HEK293 (cell line): ENCODE measurements at regions of chr17 and their contacts with region 1.

Region 1: DNA sequence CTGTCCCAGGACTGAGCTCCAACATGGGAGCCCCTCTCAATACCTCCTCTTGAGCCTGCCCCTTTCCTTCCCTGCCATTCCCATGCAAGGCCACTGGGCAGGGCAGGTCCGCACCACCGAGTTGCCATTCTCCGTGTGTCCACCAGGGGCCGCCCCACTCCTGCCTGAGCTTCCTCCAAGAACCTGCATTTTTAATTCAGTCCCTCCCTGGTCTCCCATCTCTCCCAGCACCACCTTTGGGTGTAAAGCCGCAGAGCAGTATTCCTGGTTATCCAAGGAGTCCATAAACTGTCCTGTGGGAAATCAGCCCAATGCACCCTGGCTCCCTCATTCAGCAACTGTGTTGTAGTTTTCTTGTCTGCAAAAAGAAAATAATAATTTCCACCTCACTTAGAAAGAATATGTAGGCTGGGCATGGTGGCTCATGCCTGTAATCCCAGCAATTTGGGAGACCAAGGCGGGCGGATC is 15.9 kb upstream of the ANKRD40CL start:
- H3K4me3 ChIP-seq: no peak overlapping the region
- H3K27ac ChIP-seq: no peak overlapping the region
- H3K4me1 ChIP-seq: no peaks in the 10 kb centered on the region
- CTCF ChIP-seq: peak; percentile 98

Region 2: GRCh38 chr17:50476545-50476937 is 306.7 kb before region 1 on chr17:
- CTCF ChIA-PET with region 1: no interaction called
- POLR2A ChIA-PET with region 1: no interaction called
- H3K4me3 ChIP-seq: no peak overlapping the region
- H3K27ac ChIP-seq: no peak overlapping the region
- H3K4me1 ChIP-seq: peaks cover 6% of the 10 kb centered on the region
- CTCF ChIP-seq: no peak

Region 3: DNA sequence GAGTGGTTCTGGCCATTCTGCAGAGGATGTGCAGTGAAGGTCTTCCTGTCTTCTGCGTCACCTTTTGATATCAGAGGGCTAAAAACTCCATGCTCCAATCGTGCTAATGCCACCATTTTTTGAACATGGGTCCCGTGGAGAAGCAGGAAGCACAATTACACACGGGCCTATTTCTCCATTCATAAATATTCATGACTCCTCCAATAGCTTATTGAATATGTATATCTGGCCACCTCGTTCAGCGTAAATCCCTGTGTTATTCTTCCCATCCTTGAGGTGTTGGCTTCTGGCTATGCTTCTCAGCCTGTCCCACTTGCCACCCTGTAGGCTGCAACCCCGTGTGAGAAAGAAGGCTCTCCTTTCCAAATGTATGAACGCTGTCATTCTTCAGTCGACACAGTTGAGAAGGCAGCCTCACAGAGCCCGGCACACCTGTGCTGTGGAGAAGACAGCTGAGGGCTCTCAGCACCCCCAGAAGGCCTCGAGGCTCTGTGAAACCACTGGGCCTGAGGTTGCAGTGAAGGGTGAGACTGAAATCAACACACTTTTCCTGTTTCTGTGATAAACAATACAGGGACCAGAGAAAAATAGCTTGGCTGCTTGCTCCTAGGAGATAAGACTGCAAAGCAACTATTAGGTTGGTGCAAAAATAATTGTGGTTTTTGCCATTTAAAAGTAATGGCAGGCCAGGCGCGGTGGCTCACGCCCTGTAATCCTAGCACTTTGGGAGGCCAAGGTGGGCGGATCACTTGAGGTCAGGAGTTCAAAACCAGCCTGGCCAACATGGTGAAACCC is 11.0 kb before region 1 on chr17:
- CTCF ChIA-PET with region 1: interaction called, 27 read pairs
- POLR2A ChIA-PET with region 1: interaction called, 3 read pairs
- H3K4me3 ChIP-seq: no peak overlapping the region
- H3K27ac ChIP-seq: no peak overlapping the region
- H3K4me1 ChIP-seq: no peaks in the 10 kb centered on the region
- CTCF ChIP-seq: no peak

Region 4: GRCh38 chr17:50806141-50806643 is 23.0 kb after region 1 on chr17:
- CTCF ChIA-PET with region 1: interaction called, 41 read pairs
- POLR2A ChIA-PET with region 1: no interaction called
- H3K4me3 ChIP-seq: no peak overlapping the region
- H3K27ac ChIP-seq: no peak overlapping the region
- H3K4me1 ChIP-seq: no peaks in the 10 kb centered on the region; the same call in 1 of the 2 replicates
- CTCF ChIP-seq: no peak

Region 5: GRCh38 chr17:50828508-50829170 is 45.4 kb after region 1 on chr17:
- CTCF ChIA-PET with region 1: interaction called, 11 read pairs
- POLR2A ChIA-PET with region 1: no interaction called
- H3K4me3 ChIP-seq: no peak overlapping the region
- H3K27ac ChIP-seq: no peak overlapping the region
- H3K4me1 ChIP-seq: no peaks in the 10 kb centered on the region
- CTCF ChIP-seq: no peak

Region 6: GRCh38 chr17:50853015-50853615 is 69.9 kb after region 1 on chr17:
- CTCF ChIA-PET with region 1: interaction called, 240 read pairs
- POLR2A ChIA-PET with region 1: no interaction called
- H3K4me3 ChIP-seq: no peak overlapping the region
- H3K27ac ChIP-seq: no peak overlapping the region
- H3K4me1 ChIP-seq: no peaks in the 10 kb centered on the region
- CTCF ChIP-seq: no peak

Region 7: DNA sequence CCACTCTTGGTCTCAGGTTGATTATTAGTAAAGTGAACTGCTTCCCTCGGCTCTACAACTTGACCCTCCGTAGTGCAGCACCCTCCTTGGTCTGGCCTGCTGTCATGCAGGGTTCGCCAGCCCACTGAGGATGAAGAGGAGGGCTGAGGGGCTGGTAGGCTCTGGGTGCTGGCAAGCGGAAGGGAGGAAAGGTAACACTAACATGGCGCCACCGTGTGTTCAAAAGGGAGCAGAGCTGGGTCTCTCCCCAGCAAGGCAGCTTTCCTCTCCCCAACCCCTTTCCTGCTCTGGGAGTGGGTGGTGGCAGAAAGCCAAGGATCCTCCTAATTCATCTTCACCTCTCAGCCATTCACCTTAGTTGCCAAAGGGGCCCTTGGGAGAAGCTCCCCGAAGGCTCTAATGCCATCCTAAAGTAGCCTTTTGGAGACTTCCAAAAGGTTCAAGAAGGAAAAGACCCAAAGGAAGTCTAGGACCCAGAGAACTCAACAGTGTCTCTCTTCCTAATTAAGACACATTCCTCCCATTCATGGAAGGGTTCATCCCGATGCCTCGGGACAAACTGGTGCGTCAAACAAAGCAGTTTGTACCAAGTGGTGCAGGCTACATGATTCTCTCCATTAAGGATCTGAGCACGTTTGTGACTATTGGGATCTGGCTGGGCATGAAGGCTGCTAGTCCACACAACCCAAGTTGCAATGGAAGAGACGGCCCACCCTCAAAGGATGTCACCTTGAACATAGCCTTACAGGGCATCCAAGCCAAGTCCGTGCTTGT is 173.7 kb after region 1 on chr17:
- CTCF ChIA-PET with region 1: interaction called, 29 read pairs
- POLR2A ChIA-PET with region 1: interaction called, 3 read pairs
- H3K4me3 ChIP-seq: no peak overlapping the region
- H3K27ac ChIP-seq: no peak overlapping the region
- H3K4me1 ChIP-seq: no peaks in the 10 kb centered on the region; the same call in 1 of the 2 replicates
- CTCF ChIP-seq: peak; percentile 80

Region 8: DNA sequence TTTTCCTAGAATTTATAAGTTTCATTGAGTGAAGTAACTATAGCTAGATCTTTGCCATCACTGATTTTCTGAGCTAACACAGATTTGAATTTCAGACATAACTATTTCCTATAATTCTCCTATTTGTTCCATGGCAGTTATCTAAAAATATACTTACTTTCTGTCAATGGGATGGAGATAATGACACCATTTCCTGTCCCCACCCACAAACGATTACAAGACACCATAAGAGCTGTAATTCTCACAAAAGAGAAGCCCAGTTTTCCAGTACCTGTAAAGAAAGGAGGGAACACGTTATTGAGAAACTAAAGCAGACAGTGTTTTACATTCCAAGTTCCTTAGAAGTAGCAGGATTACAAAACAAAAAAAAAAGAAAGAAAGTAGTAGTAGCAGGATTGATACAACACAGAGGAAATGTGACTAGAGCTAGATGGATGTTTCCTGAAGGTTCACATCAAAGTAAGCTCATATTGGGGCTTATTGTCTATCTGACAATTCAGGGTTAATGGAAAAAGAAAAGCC is 193.8 kb after region 1 on chr17:
- CTCF ChIA-PET with region 1: interaction called, 11 read pairs
- POLR2A ChIA-PET with region 1: no interaction called
- H3K4me3 ChIP-seq: no peak overlapping the region
- H3K27ac ChIP-seq: no peak overlapping the region
- H3K4me1 ChIP-seq: peaks cover 4% of the 10 kb centered on the region; the same call in 1 of the 2 replicates
- CTCF ChIP-seq: no peak